ENCODE measurements at regions of chr6 and their contacts with region 1.

Region 1: DNA sequence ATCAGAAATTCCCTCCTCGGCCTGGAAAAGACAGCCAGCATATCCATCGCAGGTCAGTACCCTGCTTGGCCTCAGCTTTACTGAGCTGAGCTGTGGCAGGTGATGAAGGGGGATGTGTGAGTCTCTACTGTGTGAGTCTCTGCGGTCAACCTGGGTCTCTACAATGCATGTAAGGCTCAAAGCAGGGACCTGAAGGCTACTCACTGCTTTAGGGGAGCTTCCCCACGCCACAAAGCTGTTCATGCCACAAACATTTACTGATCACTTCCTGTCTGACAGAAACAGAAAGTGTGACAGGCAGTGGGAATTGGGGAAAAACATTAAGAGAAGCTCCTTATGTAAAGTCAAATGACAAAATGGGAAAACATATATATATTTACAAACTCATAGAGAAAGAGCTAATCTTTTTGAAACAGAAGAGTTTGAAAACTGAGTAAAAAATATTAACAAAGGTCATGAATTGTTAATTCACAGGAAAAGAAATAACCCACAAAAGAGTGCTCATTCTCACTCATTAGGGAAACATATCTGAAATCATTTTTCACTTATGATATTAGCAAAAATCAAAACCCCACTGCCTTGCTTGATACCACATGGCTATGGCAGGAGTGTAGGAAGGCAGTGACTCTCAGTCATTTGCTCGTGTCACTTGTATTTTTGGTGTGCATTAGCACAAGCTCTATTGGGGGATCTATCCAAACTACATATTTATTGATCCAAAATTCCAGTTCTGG is 5.8 kb downstream of the BTN3A3 start:
- DNase-seq: no peak
- H3K4me3 ChIP-seq: no peak overlapping the region
- H3K27ac ChIP-seq: peak overlapping the region; percentile 3 to 79 (median 64)
- H3K4me1 ChIP-seq: peaks cover 34 to 62% (median 51%) of the 10 kb centered on the region in 6 donors
- H3K27me3 ChIP-seq: no peaks in the 10 kb centered on the region
- CTCF ChIP-seq: no peak
- POLR2A ChIP-seq: no peak

Region 2: DNA sequence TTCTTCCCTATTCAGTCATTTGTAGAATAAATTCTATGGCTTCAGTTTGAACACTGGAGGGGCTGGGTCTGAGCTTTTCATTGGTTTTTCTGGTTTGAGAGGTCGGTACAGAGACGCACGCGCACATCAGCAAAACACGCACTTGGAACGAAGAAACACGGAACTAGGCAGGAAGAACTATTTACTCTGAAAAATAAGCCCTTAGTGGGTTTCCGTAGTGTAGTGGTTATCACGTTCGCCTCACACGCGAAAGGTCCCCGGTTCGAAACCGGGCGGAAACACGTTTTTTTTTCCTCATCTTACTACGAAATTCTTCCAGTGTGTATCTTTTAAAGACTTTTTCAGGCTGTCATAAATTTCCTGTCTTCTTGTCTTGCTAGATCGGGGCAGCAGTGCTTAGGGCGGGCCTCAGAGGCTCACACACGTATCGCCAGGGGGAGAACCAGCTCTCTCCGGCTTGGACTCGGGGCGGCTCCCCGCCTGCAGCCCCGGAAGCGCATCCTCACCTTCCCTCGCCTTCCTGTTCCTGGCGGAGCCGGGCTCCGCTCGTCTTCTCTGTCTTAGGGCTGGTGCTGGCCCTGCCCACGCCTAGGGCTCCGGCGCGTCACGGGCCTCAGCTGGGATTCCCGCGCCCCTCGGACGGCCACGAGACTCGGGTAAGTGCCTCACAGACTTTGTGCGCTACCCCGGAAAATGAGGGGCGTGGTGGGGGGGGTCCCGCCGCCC is 91.9 kb after region 1 on chr6 and contains the start of gene HMGN4:
- intact Hi-C with region 1: loop called (anchors 10 kb)
- DNase-seq: peak; percentile 94
- H3K4me3 ChIP-seq: peak within 1 kb of the TSS; percentile 71 to 87 (median 84)
- H3K27ac ChIP-seq: peak within 1 kb of the TSS; percentile 91 to 98 (median 96)
- H3K4me1 ChIP-seq: peaks cover 11 to 82% (median 49%) of the 10 kb centered on the region in 6 donors
- H3K27me3 ChIP-seq: no peaks in the 10 kb centered on the region
- CTCF ChIP-seq: peak in 2 of 11 experiments; percentile 3 to 10
- POLR2A ChIP-seq: no peak
- total RNA-seq, gene HMGN4: 47.2 to 68.4 (median 58.2) TPM